Left lung (tissue), 14 donors: ENCODE measurements at regions of chr3 and their contacts with region 1.

Region 1: DNA sequence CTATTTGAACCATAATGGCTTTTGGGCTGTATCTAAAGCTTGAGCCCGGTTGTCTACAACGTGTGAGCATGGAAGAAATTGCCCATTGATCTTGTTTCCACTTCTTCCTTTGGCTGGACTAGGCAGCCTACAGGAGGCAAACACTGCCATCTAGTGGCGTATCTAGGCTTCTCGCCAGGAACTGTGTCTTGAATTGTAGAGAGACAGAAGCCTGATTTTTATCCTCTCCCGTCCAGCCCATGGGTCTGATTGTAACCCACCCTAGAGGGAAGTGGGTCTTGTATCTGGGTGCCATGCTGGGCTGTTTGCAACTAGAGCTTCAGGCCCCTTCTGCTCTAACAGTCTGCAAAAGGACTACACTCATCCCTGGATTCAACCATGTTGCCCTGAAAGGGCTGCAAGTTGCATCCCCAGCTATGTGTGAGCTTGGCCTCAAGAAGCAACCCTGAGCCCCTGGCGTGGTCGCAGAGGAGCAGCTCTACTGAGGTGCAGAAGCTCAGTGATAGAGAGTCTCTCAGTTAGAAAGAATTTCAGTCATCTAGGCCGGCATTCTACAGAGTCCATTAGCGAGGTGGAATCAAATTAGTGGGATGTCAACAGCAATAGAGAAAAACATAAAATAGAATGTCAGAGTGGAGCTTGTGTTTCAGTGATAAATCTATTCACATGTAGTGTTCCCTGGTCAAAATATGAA is 170.2 kb upstream of the UMPS start:
- DNase-seq: peak in 3 of 4 donors; percentile 54 to 85 (median 76)
- ATAC-seq: peak; percentile 90
- H3K4me3 ChIP-seq: no peak overlapping the region
- H3K27ac ChIP-seq: peak overlapping the region in 1 of 2 donors; percentile 30
- H3K4me1 ChIP-seq: peaks cover 0 to 5% of the 10 kb centered on the region in 2 donors
- H3K27me3 ChIP-seq: no peaks in the 10 kb centered on the region
- CTCF ChIP-seq: peak; percentile 84 to 92

Region 2: GRCh38 chr3:124351430-124352148 is 208.4 kb before region 1 on chr3:
- intact Hi-C with region 1: loop called in 1 of 2 experiments (anchors 10 kb)
- DNase-seq: peak in 2 of 4 donors; percentile 52 to 76
- ATAC-seq: peak; percentile 98
- H3K4me3 ChIP-seq: no peak overlapping the region
- H3K27ac ChIP-seq: no peak overlapping the region
- H3K4me1 ChIP-seq: peaks cover 0 to 8% of the 10 kb centered on the region in 2 donors
- H3K27me3 ChIP-seq: no peaks in the 10 kb centered on the region
- CTCF ChIP-seq: peak in 1 of 2 donors; percentile 35

Region 3: DNA sequence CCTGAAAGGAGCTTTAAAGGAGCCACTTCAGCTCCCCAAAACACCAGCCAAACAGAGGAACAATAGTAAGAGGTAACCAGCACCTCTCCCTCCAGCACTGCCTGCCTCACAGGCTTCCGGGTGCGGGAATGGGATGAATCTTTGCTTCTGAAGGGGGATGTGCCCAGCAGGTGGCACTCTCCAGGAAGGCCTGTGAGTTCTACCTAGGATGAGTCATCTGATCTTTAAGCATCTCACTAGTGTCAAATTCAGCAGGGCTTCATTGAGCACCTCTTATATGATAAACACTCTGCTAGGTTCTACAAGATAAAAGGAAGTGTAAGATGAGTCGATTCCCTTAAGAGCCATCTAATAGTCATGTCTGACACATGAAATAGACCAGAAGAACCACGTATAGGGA is 67.2 kb before region 1 on chr3:
- intact Hi-C with region 1: loop called in 1 of 2 experiments (anchors 10 kb)
- DNase-seq: no peak
- ATAC-seq: peak; percentile 52
- H3K4me3 ChIP-seq: no peak overlapping the region
- H3K27ac ChIP-seq: no peak overlapping the region
- H3K4me1 ChIP-seq: no peaks in the 10 kb centered on the region
- H3K27me3 ChIP-seq: no peaks in the 10 kb centered on the region
- CTCF ChIP-seq: peak in 1 of 2 donors; percentile 10

Region 4: GRCh38 chr3:124688581-124689454 is 128.8 kb after region 1 on chr3:
- intact Hi-C with region 1: loop called in 1 of 2 experiments (anchors 5 kb)
- DNase-seq: peak in 3 of 4 donors; percentile 65 to 82 (median 68)
- ATAC-seq: peak; percentile 93
- H3K4me3 ChIP-seq: no peak overlapping the region
- H3K27ac ChIP-seq: no peak overlapping the region
- H3K4me1 ChIP-seq: peaks cover 0 to 8% of the 10 kb centered on the region in 2 donors
- H3K27me3 ChIP-seq: no peaks in the 10 kb centered on the region
- CTCF ChIP-seq: peak; percentile 74 to 89

Region 5: DNA sequence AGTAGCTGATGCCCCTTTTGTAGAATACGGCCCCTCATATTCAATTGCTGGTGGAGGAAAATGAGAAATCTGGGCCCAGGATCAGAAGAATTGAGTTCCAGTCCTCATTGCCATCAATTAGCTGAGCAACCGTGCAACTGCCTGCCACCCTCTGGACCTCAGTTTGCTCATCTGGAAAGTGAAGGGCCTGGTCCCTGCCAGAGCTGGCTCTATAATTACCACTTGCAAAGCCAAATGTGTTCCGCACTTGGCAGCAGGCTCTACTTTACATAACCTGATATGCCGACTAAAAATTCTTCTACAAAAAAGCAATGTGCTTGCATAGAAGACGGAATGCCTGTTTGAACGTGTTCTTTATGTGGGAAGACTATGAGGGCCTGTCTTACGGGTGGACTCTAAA is 335.7 kb after region 1 on chr3:
- intact Hi-C with region 1: loop called in 1 of 2 experiments (anchors 10 kb)
- DNase-seq: no peak
- ATAC-seq: no peak
- H3K4me3 ChIP-seq: no peak overlapping the region
- H3K27ac ChIP-seq: no peak overlapping the region
- H3K4me1 ChIP-seq: peaks cover 0 to under 1% of the 10 kb centered on the region in 2 donors
- H3K27me3 ChIP-seq: no peaks in the 10 kb centered on the region
- CTCF ChIP-seq: no peak